B cell (primary cell): ENCODE measurements at regions of chr9 and their contacts with region 1.

Region 1: DNA sequence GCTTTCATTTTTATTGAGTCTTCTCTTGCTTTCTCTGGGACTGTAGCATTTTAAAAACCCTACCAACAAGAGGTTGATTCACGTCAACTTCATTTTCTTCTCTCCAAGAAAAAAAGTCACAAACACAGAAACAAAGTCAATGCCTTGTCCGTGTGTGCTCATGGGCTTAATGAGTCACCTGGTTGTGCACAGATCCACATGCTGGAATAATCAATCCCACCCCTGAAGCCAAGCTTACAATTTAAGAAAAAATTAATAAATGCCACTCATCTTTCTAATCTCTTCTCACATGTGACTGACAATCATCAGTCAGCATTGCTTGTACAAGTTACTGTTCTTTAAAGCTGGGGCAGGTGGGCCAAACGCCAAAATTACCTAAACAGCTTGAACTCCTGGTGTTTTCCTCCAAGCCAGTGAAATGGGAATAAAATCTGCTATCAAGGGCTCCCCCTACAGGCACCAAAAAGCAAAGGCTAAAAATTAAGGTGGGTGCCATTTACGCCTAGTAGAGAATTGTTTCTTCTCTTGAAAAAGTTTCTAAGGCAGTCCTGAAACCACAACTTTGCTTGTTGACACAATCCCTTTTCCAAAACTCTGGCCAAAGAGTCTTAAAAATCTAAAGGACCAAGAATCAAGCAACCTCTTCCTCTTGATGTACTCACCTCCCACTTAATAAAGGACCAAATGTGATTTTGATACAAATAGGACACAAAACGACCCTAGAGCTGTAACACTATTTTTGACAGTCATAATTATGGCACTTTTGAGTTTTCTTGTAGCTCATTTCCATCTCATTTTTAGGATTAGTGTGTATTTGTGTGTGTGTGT is 21.3 kb downstream of the TRMO start:
- DNase-seq: peak; percentile 60
- ATAC-seq: no peak
- H3K4me3 ChIP-seq: no peak overlapping the region
- H3K4me3 Mint-ChIP-seq: no peak overlapping the region
- H3K27ac ChIP-seq: no peak overlapping the region
- H3K27ac Mint-ChIP-seq: no peak overlapping the region
- H3K4me1 ChIP-seq: peaks cover 2 to 9% of the 10 kb centered on the region in 2 donors
- H3K4me1 Mint-ChIP-seq: peaks cover 17% of the 10 kb centered on the region
- H3K27me3 ChIP-seq: no peaks in the 10 kb centered on the region
- H3K27me3 Mint-ChIP-seq: no peaks in the 10 kb centered on the region
- CTCF ChIP-seq: peak; percentile 81

Region 2: GRCh38 chr9:97696803-97697601 is 203.9 kb before region 1 on chr9 and contains the start of gene XPA:
- CTCF ChIA-PET with region 1: interaction called, 4 read pairs
- POLR2A ChIA-PET with region 1: no interaction called
- intact Hi-C with region 1: loop called (anchors 5 kb)
- DNase-seq: peak; percentile 97
- ATAC-seq: peak; percentile 92
- H3K4me3 ChIP-seq: peak within 1 kb of the TSS; percentile 67 to 84 (median 74)
- H3K4me3 Mint-ChIP-seq: peak within 1 kb of the TSS; percentile 91
- H3K27ac ChIP-seq: peak within 1 kb of the TSS; percentile 77 to 82
- H3K27ac Mint-ChIP-seq: peak within 1 kb of the TSS; percentile 94
- H3K4me1 ChIP-seq: peaks cover 30 to 40% of the 10 kb centered on the region in 2 donors
- H3K4me1 Mint-ChIP-seq: peaks cover 59% of the 10 kb centered on the region
- H3K27me3 ChIP-seq: no peaks in the 10 kb centered on the region
- H3K27me3 Mint-ChIP-seq: peaks cover 7% of the 10 kb centered on the region
- CTCF ChIP-seq: no peak
- total RNA-seq, gene XPA: 21.3 and 27.4 TPM in 2 replicates

Region 3: DNA sequence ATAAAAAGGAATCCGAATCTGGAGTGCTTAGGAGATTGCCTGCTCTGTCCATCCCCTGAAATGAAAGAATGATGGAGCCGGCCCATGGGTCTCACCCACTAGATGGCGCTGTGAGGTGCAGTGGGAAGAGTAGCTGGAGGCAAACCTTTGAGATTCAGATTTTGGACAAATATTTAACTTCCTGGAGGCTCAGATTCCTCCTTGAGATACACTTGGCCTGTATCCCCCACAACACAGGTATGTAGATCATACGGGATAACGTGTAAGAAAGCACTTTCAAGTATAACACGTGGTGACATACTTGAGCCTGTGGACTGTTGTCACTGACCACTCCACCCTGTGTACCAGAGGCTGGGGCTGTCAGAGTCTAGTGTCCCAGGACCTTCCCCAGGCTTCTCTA is 10.9 kb before region 1 on chr9:
- CTCF ChIA-PET with region 1: interaction called, 28 read pairs
- POLR2A ChIA-PET with region 1: no interaction called
- intact Hi-C with region 1: no loop called
- DNase-seq: peak; percentile 45
- ATAC-seq: no peak
- H3K4me3 ChIP-seq: no peak overlapping the region
- H3K4me3 Mint-ChIP-seq: no peak overlapping the region
- H3K27ac ChIP-seq: no peak overlapping the region
- H3K27ac Mint-ChIP-seq: no peak overlapping the region
- H3K4me1 ChIP-seq: no peaks in the 10 kb centered on the region
- H3K4me1 Mint-ChIP-seq: no peaks in the 10 kb centered on the region
- H3K27me3 ChIP-seq: no peaks in the 10 kb centered on the region
- H3K27me3 Mint-ChIP-seq: peaks cover 4% of the 10 kb centered on the region
- CTCF ChIP-seq: peak; percentile 72